Activated CD4-positive, alpha-beta memory T cell treated with anti-CD3 and anti-CD28 coated beads for 36 hours (primary cell): ENCODE measurements at regions of chr6 and their contacts with region 1.

Region 1: GRCh38 chr6:107820338-107821261 is 3.5 kb downstream of the SCML4 start:
- DNase-seq: peak; percentile 45
- H3K4me3 Mint-ChIP-seq: peak overlapping the region; percentile 86
- H3K27ac Mint-ChIP-seq: peak overlapping the region; percentile 80
- H3K4me1 Mint-ChIP-seq: peaks cover 83% of the 10 kb centered on the region
- H3K27me3 Mint-ChIP-seq: no peaks in the 10 kb centered on the region

Region 2: DNA sequence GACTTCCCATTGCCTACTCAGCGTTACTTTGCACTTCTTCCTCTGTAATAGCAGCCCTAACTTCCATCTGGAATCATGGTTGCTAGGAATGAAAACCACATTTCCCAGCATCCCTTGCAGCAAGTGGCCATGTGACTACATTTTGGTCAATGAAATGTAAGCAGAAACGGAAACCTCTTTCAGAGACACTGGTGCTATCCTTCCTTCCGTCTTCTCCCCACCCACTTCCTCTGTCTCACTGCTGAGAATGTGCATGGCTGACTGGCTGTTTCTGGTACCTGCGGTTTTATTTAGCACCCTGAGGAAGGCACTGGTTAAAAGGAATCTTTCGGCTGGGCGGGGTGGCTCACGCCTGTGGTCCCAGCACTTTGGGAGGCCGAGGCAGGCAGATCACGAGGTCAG is 103.9 kb before region 1 on chr6:
- CTCF ChIA-PET with region 1: no interaction called
- POLR2A ChIA-PET with region 1: interaction called, 11 read pairs
- intact Hi-C with region 1: loop called (anchors 1 kb)
- DNase-seq: peak; percentile 86
- H3K4me3 Mint-ChIP-seq: peak overlapping the region; percentile 64
- H3K27ac Mint-ChIP-seq: peak overlapping the region; percentile 84
- H3K4me1 Mint-ChIP-seq: peaks cover 70% of the 10 kb centered on the region
- H3K27me3 Mint-ChIP-seq: no peaks in the 10 kb centered on the region

Region 3: DNA sequence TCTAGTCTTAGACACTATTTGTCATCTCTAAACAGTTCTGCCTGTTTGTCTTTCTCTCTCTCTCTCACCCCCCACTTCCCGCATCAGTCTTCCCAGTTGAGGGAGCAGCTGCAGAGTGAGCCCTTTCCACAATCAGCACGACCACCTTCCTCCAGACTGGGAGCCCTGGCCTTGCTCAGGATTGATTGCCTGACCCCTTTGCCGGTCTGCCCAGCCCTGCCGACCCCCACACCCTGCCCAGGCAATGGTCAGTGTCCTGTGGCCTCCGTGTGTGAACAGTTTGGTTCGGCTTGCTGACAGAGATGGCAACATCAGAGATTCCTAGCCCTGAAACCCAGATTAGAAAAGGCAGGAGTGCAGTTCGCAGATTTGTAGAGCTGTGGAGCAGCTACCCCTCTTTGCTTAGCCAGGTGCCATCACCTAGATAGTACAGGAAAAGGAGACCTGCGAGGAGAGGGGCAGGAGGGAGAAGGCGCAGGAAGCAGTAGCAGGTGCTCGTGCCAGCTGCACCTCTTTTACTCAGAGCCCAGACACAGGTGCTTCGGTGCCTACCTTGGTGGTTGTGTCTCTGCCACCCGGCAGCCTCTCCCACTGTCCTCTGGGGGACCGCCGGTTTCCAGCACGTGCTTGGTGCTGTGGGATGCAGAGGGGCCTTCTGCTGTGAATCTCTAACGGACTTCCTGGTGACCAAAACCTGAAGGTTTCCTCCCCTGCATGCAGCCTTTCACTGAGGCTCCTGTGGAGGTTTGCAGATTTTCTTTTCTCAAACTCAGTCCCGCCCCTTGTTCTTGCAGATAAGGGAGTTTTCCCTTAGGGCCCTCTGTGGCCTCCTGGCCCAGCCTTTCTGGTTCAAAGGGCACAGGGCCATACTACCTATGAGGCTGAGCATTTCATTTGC is 88.9 kb before region 1 on chr6:
- CTCF ChIA-PET with region 1: interaction called, 18 read pairs
- POLR2A ChIA-PET with region 1: interaction called, 5 read pairs
- intact Hi-C with region 1: loop called (anchors 1 kb)
- DNase-seq: peak; percentile 47
- H3K4me3 Mint-ChIP-seq: peak overlapping the region; percentile 75
- H3K27ac Mint-ChIP-seq: peak overlapping the region; percentile 74
- H3K4me1 Mint-ChIP-seq: peaks cover 83% of the 10 kb centered on the region
- H3K27me3 Mint-ChIP-seq: no peaks in the 10 kb centered on the region

Region 4: DNA sequence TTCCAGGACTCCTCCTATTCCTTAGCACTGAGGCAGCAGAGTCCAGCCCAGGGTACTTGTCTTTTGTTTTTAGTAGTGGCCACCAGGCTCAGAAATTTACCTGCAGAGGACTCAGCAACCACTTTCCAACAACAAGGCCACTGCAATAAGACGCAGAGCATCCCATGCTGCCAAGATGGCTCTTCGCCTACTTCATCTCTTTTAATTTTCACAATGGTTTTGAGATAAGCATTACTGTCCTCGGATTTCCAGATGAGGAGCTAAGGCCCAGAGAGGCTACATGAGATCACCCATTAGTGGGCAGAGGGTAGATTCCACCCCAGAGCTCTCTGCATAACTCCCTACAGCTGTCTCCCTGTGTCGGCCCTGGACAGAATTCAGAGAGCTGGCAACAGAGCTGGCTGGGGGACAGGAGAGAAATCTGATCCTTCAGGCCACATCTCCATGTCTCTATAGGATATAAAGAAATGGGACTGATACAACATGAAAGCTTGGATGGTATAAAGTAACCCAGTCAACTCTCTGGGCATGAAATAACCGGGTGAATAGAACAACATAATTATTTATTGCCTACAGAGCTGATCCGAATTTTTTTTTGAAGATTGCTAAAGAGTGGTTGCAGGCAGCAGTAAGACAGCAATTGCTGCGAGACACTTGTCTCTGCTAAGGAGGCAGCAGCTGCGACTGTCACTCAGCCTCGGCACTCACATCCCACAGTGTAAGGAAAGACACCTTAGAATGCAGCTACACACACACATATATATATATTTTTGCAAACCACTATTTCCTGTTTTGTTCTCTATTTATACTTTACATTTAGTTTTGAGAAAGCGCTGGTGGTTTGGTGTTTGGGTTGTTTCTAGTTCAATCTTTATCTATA is 33.7 kb before region 1 on chr6:
- CTCF ChIA-PET with region 1: interaction called, 6 read pairs
- POLR2A ChIA-PET with region 1: interaction called, 3 read pairs
- intact Hi-C with region 1: loop called (anchors 2 kb)
- DNase-seq: peak; percentile 51
- H3K4me3 Mint-ChIP-seq: peak overlapping the region; percentile 40
- H3K27ac Mint-ChIP-seq: peak overlapping the region; percentile 28
- H3K4me1 Mint-ChIP-seq: peaks cover 74% of the 10 kb centered on the region
- H3K27me3 Mint-ChIP-seq: no peaks in the 10 kb centered on the region

Region 5: DNA sequence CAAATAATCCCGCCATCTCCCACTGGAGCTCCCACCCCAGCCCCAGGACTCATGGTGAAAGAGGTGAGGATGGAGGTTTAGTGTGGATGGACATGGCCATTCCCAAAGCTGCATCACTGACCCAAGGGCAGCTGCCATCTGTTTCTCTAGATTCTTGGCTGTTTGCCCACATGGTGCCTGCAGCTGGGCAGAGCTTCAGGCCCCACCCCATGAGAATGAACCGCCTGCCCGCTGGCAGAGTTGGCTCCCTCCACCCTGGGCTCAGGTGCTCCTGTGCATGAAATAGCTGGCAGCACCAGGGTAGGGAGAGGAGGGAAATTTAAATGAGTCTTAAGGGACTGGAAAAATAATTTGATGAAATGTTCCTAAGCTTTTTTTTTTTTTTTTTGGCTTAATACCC is 13.9 kb before region 1 on chr6:
- CTCF ChIA-PET with region 1: interaction called, 6 read pairs
- POLR2A ChIA-PET with region 1: interaction called, 7 read pairs
- intact Hi-C with region 1: loop called (anchors 2 kb)
- DNase-seq: no peak
- H3K4me3 Mint-ChIP-seq: no peak overlapping the region
- H3K27ac Mint-ChIP-seq: no peak overlapping the region
- H3K4me1 Mint-ChIP-seq: peaks cover 67% of the 10 kb centered on the region
- H3K27me3 Mint-ChIP-seq: no peaks in the 10 kb centered on the region

Region 6: DNA sequence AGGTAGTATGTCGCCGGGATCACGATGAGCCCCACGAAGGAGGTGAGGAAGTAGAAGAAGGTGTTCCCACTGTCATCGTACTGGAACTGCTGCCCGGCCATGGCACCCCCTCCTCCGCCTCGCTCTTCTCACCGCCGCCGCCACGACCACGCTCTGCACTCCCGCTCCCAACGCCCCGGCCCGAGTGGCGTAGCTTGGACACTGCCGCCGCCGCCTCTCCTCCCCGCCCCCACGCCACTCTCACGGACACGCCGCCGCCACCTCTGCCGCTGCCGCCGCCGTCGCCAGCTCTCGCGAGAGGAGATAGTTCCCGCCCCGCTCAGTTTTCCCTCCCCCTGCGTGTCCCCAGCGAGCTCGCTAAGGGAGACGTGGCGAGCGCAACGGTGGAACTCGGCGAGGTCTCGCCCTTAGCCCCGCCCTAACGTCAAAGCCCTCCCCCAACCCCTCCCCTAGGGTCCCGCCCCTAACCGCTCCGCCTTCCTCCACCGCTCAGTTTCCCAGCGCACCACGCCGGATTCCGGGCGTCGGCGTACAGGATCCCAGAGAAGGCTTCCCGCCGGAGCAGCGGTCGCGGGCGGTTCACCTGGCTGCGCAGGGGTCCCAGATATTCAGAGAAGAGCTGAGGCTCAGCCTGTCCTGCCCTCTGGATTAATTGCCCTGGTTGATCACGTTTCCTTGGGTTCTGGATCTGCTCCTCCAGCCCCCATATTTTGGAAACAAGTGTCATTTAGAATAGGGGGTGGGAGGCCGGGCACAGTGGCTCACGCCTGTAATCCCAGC is 137.5 kb after region 1 on chr6 and contains the start of gene SEC63:
- CTCF ChIA-PET with region 1: no interaction called
- POLR2A ChIA-PET with region 1: no interaction called
- intact Hi-C with region 1: loop called (anchors 2 kb)
- DNase-seq: peak; percentile 99
- H3K4me3 Mint-ChIP-seq: peak within 1 kb of the TSS; percentile 100
- H3K27ac Mint-ChIP-seq: peak within 1 kb of the TSS; percentile 95
- H3K4me1 Mint-ChIP-seq: peaks cover 26% of the 10 kb centered on the region
- H3K27me3 Mint-ChIP-seq: no peaks in the 10 kb centered on the region
- total RNA-seq, gene SEC63: 90.6 to 95.9 TPM

Region 7: DNA sequence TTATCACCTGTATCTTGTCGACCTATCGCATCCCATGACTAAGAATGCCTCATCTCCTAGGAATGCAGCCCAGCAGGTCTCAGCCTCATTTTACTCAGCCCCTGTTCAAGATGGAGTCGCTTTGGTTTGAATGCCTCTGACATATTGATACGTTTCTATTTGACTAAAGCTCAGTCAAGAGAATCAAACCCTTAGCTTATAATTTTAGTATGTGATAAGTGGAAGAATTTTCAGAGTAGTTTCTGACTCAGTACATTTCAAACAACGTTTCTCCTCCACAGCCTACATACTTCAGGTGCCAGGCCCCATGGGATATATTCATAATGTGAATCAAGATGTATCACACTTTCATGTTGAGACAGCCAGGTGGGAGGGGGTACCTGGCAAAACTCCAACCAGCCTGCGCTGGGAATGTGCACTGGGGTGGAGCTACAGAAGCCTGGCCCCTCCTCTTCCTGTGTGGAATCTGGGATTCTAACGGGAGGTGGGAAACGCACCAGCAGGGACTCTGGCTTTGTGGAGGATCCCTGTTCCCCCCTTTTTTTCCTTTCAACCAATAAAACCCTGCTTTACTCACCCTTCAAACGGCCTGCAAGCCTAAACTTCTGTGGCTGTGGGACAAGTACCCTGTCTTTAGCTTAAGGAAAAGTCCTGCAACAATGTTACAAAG is 144.2 kb after region 1 on chr6:
- CTCF ChIA-PET with region 1: no interaction called
- POLR2A ChIA-PET with region 1: no interaction called
- intact Hi-C with region 1: loop called (anchors 2 kb)
- DNase-seq: peak; percentile 88
- H3K4me3 Mint-ChIP-seq: no peak overlapping the region
- H3K27ac Mint-ChIP-seq: peak overlapping the region; percentile 95
- H3K4me1 Mint-ChIP-seq: peaks cover 20% of the 10 kb centered on the region
- H3K27me3 Mint-ChIP-seq: no peaks in the 10 kb centered on the region

Region 8: GRCh38 chr6:108097882-108098281 is 277.3 kb after region 1 on chr6:
- CTCF ChIA-PET with region 1: no interaction called
- POLR2A ChIA-PET with region 1: no interaction called
- intact Hi-C with region 1: no loop called
- DNase-seq: no peak
- H3K4me3 Mint-ChIP-seq: no peak overlapping the region
- H3K27ac Mint-ChIP-seq: no peak overlapping the region
- H3K4me1 Mint-ChIP-seq: no peaks in the 10 kb centered on the region
- H3K27me3 Mint-ChIP-seq: peaks cover 3% of the 10 kb centered on the region